ENCODE measurements at regions of chr3 and their contacts with region 1.

Region 1: GRCh38 chr3:65833761-65834505 is 204.8 kb downstream of the MAGI1 start:
- DNase-seq: no peak
- ATAC-seq: no peak
- H3K4me3 ChIP-seq: no peak overlapping the region
- H3K27ac ChIP-seq: no peak overlapping the region
- H3K4me1 ChIP-seq: peaks cover 11% of the 10 kb centered on the region
- H3K27me3 ChIP-seq: no peaks in the 10 kb centered on the region
- CTCF ChIP-seq: no peak
- EP300 ChIP-seq: no peak
- POLR2A ChIP-seq: no peak
- RAD21 ChIP-seq: no peak

Region 2: DNA sequence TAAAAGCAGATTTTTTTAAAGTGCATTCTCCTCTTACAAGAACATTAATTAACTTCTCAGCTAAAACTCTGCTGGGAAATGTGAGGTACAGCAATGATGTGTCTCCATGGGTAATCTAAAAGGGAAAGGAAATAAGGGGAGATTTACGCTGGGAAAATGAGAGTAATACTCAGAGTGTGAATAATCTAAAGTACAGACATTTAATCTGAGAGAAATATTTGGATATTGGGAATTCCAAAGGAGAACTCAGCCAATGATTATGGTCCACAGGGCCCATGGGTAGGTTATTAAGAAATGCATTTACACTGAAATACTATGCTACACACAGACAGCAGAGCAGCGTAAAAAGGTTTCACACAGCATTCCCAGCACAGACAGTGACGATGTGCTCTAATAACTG is 25.1 kb before region 1 on chr3:
- CTCF ChIA-PET with region 1: no interaction called
- POLR2A ChIA-PET with region 1: no interaction called
- RAD21 ChIA-PET with region 1: no interaction called
- SMC1A ChIA-PET with region 1: no interaction called
- in situ Hi-C with region 1: no loop called
- intact Hi-C with region 1: no loop called
- DNase-seq: no peak
- ATAC-seq: no peak
- H3K4me3 ChIP-seq: no peak overlapping the region
- H3K27ac ChIP-seq: no peak overlapping the region
- H3K4me1 ChIP-seq: no peaks in the 10 kb centered on the region
- H3K27me3 ChIP-seq: no peaks in the 10 kb centered on the region
- CTCF ChIP-seq: no peak
- EP300 ChIP-seq: no peak
- POLR2A ChIP-seq: no peak
- RAD21 ChIP-seq: no peak

Region 3: GRCh38 chr3:65861718-65862117 is 27.8 kb after region 1 on chr3:
- CTCF ChIA-PET with region 1: no interaction called
- POLR2A ChIA-PET with region 1: no interaction called
- RAD21 ChIA-PET with region 1: no interaction called
- SMC1A ChIA-PET with region 1: no interaction called
- in situ Hi-C with region 1: no loop called
- intact Hi-C with region 1: loop called (anchors 1 kb)
- DNase-seq: no peak
- ATAC-seq: no peak
- H3K4me3 ChIP-seq: no peak overlapping the region
- H3K27ac ChIP-seq: no peak overlapping the region
- H3K4me1 ChIP-seq: no peaks in the 10 kb centered on the region
- H3K27me3 ChIP-seq: no peaks in the 10 kb centered on the region; a peak in 1 of 4 replicates
- CTCF ChIP-seq: no peak
- EP300 ChIP-seq: no peak
- POLR2A ChIP-seq: no peak
- RAD21 ChIP-seq: no peak